T-cell (primary cell): ENCODE measurements at regions of chr19 and their contacts with region 1.

Region 1: GRCh38 chr19:36222503-36222902 is 7.6 kb downstream of the ZNF146 start:
- DNase-seq: no peak
- ATAC-seq: no peak
- H3K4me3 ChIP-seq: no peak overlapping the region
- H3K4me3 Mint-ChIP-seq: peak overlapping the region in 1 of 3 donors; percentile 20
- H3K27ac ChIP-seq: no peak overlapping the region
- H3K27ac Mint-ChIP-seq: no peak overlapping the region
- H3K4me1 ChIP-seq: peaks cover 10 to 20% of the 10 kb centered on the region in 2 experiments
- H3K4me1 Mint-ChIP-seq: peaks cover 50 to 52% (median 50%) of the 10 kb centered on the region in 3 donors
- H3K27me3 ChIP-seq: no peaks in the 10 kb centered on the region
- H3K27me3 Mint-ChIP-seq: no peaks in the 10 kb centered on the region

Region 2: DNA sequence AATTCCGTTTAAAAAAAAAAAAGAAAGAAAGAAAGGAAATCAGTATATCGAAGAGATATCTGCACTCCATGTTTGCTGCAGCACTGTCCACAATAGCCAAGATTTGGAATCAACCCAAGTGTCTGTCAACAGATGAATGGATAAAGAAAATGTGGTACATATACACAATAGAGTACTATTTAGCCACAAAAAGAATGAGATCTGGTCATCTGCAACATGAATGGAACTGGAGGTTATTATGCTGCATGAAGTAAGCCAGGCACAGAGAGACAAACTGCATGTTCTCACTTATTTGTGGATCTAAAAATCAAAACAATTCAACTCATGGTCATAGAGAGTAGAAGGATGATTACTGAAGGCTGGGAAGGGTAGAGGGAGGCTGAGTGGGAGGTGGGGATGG is 24.4 kb before region 1 on chr19:
- CTCF ChIA-PET with region 1: no interaction called
- POLR2A ChIA-PET with region 1: no interaction called
- DNase-seq: no peak
- ATAC-seq: no peak
- H3K4me3 ChIP-seq: no peak overlapping the region
- H3K4me3 Mint-ChIP-seq: no peak overlapping the region
- H3K27ac ChIP-seq: no peak overlapping the region
- H3K27ac Mint-ChIP-seq: no peak overlapping the region
- H3K4me1 ChIP-seq: no peaks in the 10 kb centered on the region
- H3K4me1 Mint-ChIP-seq: no peaks in the 10 kb centered on the region
- H3K27me3 ChIP-seq: no peaks in the 10 kb centered on the region
- H3K27me3 Mint-ChIP-seq: no peaks in the 10 kb centered on the region

Region 3: GRCh38 chr19:37227996-37228395 is 1005.5 kb after region 1 on chr19:
- CTCF ChIA-PET with region 1: no interaction called
- POLR2A ChIA-PET with region 1: interaction called in 1 of 2 experiments, 16 read pairs
- DNase-seq: peak in 16 of 35 experiments; percentile 5 to 40 (median 16)
- ATAC-seq: no peak
- H3K4me3 ChIP-seq: no peak overlapping the region
- H3K4me3 Mint-ChIP-seq: no peak overlapping the region
- H3K27ac ChIP-seq: no peak overlapping the region
- H3K27ac Mint-ChIP-seq: no peak overlapping the region
- H3K4me1 ChIP-seq: no peaks in the 10 kb centered on the region
- H3K4me1 Mint-ChIP-seq: peaks cover 0 to 3% (median 1%) of the 10 kb centered on the region in 3 donors
- H3K27me3 ChIP-seq: no peaks in the 10 kb centered on the region
- H3K27me3 Mint-ChIP-seq: no peaks in the 10 kb centered on the region